ENCODE measurements at regions of chr4 and their contacts with region 1.

Region 1: DNA sequence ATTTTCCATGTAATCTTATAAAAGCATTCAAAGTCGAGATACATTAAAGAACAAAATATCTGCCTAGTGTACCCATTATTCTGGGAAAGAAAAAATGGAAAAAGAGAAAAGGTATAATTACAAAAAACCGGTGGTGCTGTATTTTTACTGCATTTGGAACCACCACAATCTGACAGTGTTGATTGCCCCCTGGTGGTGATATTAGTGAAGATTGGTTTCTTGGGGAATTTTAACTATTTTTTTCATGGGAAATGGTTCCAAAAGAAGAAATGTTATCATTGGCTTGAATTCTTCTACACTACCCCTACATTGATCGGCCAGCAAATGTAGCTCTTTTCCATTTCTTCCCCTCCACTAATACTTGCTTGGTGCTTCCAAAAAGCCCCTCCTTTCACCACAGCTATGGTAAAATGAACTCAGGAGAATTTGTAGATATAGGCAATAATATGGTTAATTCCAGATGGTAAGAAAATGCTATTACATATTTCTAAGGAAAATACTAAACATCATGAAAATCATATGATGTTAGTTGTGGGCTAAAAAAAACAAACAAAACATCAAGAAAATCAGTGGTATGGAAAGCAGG is 50.0 kb downstream of the COX18 start:
- DNase-seq: no peak

Region 2: DNA sequence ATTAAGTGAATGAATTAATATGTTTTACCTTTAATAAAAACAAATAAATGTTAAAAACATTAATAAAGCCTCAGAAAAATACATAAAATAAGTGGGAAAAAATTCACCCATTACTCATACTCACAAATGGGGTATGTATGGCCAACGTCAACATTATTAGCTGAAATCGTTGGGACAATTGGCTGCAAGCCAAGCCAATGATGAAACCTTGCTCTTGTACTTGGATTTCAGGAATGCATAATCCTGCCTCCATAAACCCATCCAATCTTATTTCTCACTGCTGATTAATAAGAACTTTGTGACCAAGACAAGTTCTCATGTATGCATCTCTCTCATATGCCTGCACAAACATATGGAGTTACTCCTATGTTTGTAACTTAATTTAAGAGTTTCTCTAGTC is 415.2 kb before region 1 on chr4:
- intact Hi-C with region 1: no loop called
- DNase-seq: no peak

Region 3: GRCh38 chr4:72701987-72702819 is 317.4 kb before region 1 on chr4:
- intact Hi-C with region 1: loop called (anchors 10 kb)
- DNase-seq: no peak

Region 4: GRCh38 chr4:73869130-73870050 is 849.8 kb after region 1 on chr4 and contains the start of gene CXCL1:
- intact Hi-C with region 1: no loop called
- DNase-seq: peak; percentile 86
- total RNA-seq, gene CXCL1: 0.74 to 2.2 TPM